ENCODE measurements at regions of chr2 and their contacts with region 1.

Region 1: GRCh38 chr2:95121407-95122196 is at the start of gene MRPS5:
- DNase-seq: peak; percentile 65 to 95 (median 89)

Region 2: GRCh38 chr2:95022309-95023221 is 99.0 kb before region 1 on chr2:
- intact Hi-C with region 1: loop called (anchors 5 kb)
- DNase-seq: peak; percentile 65 to 96 (median 90)

Region 3: GRCh38 chr2:95159690-95160449 is 38.3 kb after region 1 on chr2 and contains the start of gene ZNF514:
- intact Hi-C with region 1: loop called (anchors 5 kb)
- DNase-seq: peak; percentile 42 to 93 (median 84)

Region 4: GRCh38 chr2:95207111-95207961 is 85.7 kb after region 1 on chr2 and contains the start of gene ZNF892:
- intact Hi-C with region 1: no loop called
- DNase-seq: peak; percentile 78 to 97 (median 94)

Region 5: GRCh38 chr2:95685513-95685912 is 563.9 kb after region 1 on chr2:
- intact Hi-C with region 1: no loop called
- DNase-seq: no peak

Measured in head of caudate nucleus (tissue), 42 donors.